Common myeloid progenitor, CD34-positive (primary cell): ENCODE measurements at regions of chr4 and their contacts with region 1.

Region 1: DNA sequence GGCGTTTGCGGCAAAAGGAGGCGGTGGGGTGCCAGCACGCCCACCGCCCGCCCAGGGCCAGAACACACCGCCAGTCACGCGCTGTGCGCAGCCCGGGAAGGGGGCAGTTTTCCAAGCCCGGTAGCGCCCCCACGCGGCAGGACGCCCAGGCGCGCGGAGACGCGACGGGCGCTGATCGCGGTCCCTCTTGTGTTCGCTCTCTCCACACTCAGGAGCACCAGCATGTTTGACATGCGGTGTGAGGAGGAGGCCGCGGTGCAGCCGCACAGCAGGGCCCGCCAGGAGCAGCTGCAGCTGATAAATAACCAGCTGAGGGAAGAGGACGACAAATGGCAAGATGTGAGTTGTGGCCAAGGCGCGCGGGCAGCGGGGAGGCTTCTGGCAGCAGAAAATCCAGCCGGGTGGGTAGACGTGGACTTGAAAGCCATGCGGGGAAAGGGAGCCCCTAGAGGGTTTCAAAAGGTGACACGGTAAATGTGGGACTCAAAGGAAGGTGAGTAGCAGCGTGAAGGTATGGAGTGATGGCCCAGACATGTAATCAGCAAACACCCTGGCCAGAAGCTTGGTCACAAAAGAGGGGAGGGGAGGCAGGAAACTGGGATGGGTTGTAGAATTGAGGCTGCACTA is 104.1 kb downstream of the PHOX2B start:
- DNase-seq: peak; percentile 66 to 80 (median 77)
- H3K4me3 ChIP-seq: peak overlapping the region in 3 of 7 experiments; percentile 33 to 64 (median 38)
- H3K27ac ChIP-seq: no peak overlapping the region
- H3K4me1 ChIP-seq: peaks cover 3 to 37% (median 21%) of the 10 kb centered on the region in 4 experiments
- H3K27me3 ChIP-seq: no peaks in the 10 kb centered on the region

Region 2: GRCh38 chr4:41257257-41257901 is 387.0 kb before region 1 on chr4:
- CTCF ChIA-PET with region 1: interaction called, 14 read pairs
- POLR2A ChIA-PET with region 1: no interaction called
- DNase-seq: peak; percentile 58 to 86 (median 83)
- H3K4me3 ChIP-seq: peak overlapping the region; percentile 51 to 75 (median 61)
- H3K27ac ChIP-seq: no peak overlapping the region
- H3K4me1 ChIP-seq: peaks cover 5 to 25% (median 17%) of the 10 kb centered on the region in 4 experiments
- H3K27me3 ChIP-seq: peaks cover 10 to 29% (median 14%) of the 10 kb centered on the region in 5 experiments

Region 3: GRCh38 chr4:41485041-41485440 is 159.4 kb before region 1 on chr4:
- CTCF ChIA-PET with region 1: no interaction called
- POLR2A ChIA-PET with region 1: no interaction called
- DNase-seq: peak; percentile 13 to 69 (median 56)
- H3K4me3 ChIP-seq: peak overlapping the region in 1 of 7 experiments; percentile 16
- H3K27ac ChIP-seq: no peak overlapping the region
- H3K4me1 ChIP-seq: peaks cover 6 to 34% (median 17%) of the 10 kb centered on the region in 4 experiments
- H3K27me3 ChIP-seq: no peaks in the 10 kb centered on the region

Region 4: DNA sequence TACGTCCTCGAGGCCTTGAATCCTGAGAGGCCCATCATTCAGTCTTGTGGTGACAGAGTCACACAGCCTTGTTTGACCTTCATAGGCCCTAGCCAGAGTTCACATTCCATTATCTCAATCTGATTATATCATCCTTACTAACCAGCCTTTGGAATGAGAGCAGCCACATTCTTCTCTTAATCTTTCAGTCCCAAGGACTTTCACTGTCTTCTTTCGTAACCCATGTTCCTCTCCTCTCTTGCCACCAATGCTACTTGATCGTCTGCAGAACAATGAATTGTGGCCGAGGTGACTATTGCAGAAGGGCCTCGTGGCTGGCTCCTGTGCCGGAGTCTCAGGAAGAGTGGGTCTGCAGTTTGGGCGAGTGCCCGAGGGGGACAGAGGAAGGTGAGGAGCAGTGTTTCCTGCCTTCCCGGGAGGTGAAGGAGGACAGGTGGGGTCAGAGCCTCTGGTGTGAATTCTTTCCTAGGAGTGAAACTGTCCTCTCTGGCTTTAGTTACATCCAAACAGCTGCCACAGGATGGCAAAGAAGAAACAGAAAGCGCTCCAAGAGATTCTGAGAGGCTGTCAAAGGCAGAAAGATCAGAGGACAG is 11.8 kb before region 1 on chr4:
- CTCF ChIA-PET with region 1: interaction called, 16 read pairs
- POLR2A ChIA-PET with region 1: no interaction called
- DNase-seq: no peak
- H3K4me3 ChIP-seq: no peak overlapping the region
- H3K27ac ChIP-seq: no peak overlapping the region
- H3K4me1 ChIP-seq: no peaks in the 10 kb centered on the region
- H3K27me3 ChIP-seq: no peaks in the 10 kb centered on the region

Region 5: DNA sequence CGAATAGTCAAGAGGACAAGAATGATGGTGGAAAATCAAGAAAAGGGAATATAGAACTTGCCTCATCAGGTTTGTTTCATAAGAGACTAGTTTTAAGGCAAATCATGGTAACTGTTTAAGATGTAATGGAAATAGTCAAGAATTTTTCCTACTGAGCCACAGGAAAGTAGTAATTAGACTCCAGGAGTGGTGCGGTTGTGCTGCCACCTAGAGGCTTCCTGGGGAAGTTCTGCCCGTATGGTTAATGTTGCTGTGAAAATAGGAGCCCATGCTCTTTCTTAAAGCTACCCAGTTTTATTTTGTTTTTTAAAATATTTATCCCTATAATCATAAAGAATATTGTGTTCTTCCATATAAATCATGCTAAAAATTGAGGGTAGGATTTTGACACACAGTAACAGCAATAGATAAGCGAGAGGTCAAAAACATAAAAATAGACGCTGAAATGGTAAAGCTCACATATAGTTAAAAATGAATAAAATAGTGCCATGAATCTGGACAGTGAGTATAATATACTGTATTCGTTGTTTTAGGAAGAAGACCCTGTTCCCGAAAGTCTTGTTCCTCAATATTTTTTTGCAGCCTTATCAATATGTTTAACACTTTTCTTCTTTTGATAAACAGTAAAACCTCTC is 17.2 kb after region 1 on chr4:
- CTCF ChIA-PET with region 1: interaction called, 36 read pairs
- POLR2A ChIA-PET with region 1: no interaction called
- DNase-seq: peak; percentile 38 to 73 (median 62)
- H3K4me3 ChIP-seq: no peak overlapping the region
- H3K27ac ChIP-seq: no peak overlapping the region
- H3K4me1 ChIP-seq: no peaks in the 10 kb centered on the region
- H3K27me3 ChIP-seq: peaks cover 0 to 2% (median 0%) of the 10 kb centered on the region in 5 experiments

Region 6: DNA sequence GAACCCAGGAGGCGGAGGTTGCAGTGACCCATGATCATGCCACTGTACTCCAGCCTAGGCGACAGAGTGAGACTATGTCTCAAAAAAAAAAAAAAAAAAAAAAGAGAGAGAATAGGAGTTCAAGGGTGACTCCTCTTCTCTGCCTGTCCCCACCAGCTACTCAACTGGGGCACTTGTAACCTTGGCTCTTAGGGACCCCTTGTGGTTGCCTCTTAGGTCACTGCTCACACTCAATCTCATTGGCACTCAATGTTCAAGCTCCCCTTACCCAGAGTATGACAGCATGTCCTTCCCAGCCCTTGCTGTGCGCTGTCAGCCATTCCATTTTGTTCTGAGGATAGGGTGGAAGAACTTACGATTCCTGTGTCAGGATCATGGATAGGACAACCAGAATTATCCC is 590.4 kb after region 1 on chr4:
- CTCF ChIA-PET with region 1: no interaction called
- POLR2A ChIA-PET with region 1: no interaction called
- DNase-seq: peak in 1 of 3 donors; percentile 5
- H3K4me3 ChIP-seq: no peak overlapping the region
- H3K27ac ChIP-seq: no peak overlapping the region
- H3K4me1 ChIP-seq: no peaks in the 10 kb centered on the region
- H3K27me3 ChIP-seq: no peaks in the 10 kb centered on the region